Dendritic cell treated with granulocyte-macrophage colony-stimulating factor and Interleukin-4, amounts not matched to agents 40 ng/mL and 50 ng/mL, for 4 days (primary cell): ENCODE measurements at regions of chr3 and their contacts with region 1.

Region 1: DNA sequence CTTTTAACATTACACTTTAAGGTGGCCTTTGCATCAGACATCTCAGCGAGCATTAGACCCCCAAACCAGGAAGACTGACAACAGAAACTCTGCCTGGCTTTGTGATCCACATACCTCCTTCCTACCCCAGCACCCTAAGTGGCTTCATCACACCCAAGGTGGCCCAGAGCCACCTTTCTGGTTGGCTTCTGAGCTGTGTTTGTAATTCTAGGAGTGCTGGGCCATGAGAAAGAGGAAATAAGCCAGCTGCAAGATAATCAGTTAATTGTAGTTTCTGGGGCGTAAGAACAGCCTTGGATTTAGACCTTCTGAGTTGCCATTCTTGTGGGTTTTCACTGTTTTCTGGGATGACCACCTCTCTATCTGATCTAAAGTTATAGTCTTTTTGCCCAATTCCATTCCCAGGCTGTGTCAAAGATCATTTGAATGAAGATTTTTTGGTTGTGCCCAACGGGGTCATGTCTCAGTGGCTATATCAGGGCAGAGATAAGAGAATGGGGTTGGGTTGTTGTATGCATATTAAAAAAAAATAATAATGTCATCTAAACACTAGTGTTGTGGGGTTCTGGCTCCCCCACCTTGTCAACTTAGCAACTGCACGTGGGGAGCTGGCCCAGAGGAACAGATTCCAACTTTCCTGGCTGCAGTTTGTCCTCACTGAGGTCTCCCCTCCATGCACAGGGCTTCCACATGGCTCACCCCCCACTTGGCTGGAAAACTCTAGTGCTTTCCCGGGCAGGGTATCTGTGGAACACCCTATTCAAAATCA is 234.8 kb upstream of the WNT5A start:
- H3K4me3 Mint-ChIP-seq: no peak overlapping the region
- H3K27ac Mint-ChIP-seq: no peak overlapping the region
- H3K4me1 Mint-ChIP-seq: no peaks in the 10 kb centered on the region
- H3K27me3 Mint-ChIP-seq: peaks cover 28% of the 10 kb centered on the region

Region 2: DNA sequence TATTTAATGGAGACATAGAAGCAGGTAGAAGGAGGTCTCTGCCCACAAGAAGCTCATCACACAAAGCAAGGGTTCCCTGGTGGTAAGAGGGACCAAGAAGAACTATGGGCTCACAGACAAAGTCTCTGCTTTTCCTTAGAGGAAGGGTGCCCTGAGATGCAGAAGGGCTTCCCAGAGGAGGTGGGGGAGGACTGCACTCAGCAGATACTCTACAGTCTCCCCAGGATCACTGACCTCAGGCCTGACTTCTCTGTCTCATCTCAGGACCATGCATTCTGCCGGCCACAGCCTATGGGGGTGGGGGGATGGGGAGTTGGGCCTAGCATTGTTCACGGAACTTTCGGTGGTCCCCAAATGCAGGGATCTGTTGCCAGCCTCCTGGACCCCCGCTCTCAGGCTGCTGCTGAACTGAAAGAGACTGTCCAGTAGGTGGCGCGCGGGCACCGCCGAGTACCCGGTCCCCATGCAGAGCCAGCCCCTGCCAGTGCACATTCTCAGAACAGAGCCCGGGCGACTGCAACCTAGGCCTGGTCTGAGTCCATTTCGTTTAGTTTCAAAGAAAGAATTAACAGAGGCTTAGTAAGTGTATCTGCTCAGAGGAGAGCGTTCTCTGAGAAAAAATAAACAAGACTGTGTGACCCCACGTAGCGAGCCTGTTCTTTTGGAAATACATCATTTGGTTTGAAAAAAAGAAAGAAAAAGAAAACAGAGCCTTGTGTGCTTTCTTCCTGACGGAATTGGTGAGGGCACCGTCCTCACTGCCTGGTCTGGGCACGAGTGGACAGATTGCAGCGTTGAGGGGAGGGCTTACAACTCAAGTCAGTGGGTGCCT is 868.1 kb before region 1 on chr3:
- intact Hi-C with region 1: loop called (anchors 10 kb)
- H3K4me3 Mint-ChIP-seq: no peak overlapping the region
- H3K27ac Mint-ChIP-seq: no peak overlapping the region
- H3K4me1 Mint-ChIP-seq: no peaks in the 10 kb centered on the region
- H3K27me3 Mint-ChIP-seq: peaks cover 7% of the 10 kb centered on the region

Region 3: GRCh38 chr3:54951405-54951804 is 770.5 kb before region 1 on chr3:
- intact Hi-C with region 1: loop called (anchors 5 kb)
- H3K4me3 Mint-ChIP-seq: no peak overlapping the region
- H3K27ac Mint-ChIP-seq: no peak overlapping the region
- H3K4me1 Mint-ChIP-seq: no peaks in the 10 kb centered on the region
- H3K27me3 Mint-ChIP-seq: peaks cover 6% of the 10 kb centered on the region

Region 4: DNA sequence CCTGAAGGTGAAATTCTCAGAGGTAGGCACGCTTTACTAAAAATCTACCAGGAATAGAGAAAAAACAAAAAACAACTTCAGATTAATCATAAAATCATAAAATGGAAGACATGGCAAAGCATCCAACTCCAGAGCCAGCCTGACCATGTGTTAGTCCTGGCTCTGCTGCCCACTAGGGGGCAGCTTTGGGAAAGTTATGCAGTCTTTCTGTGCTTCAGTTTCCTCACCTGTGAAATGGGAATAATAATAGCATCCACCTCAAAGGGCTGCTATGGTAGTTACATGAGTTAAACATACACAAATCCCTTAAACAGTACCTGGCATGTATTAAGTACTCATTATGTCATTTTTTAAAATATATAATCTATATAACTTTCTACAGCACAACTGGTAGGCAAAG is 287.1 kb before region 1 on chr3:
- intact Hi-C with region 1: loop called (anchors 1 kb)
- H3K4me3 Mint-ChIP-seq: no peak overlapping the region
- H3K27ac Mint-ChIP-seq: no peak overlapping the region
- H3K4me1 Mint-ChIP-seq: no peaks in the 10 kb centered on the region
- H3K27me3 Mint-ChIP-seq: peaks cover 4% of the 10 kb centered on the region